ENCODE measurements at regions of chr11 and their contacts with region 1.

Region 1: GRCh38 chr11:45846974-45847910 is at the start of gene CRY2:
- DNase-seq: peak; percentile 98
- ATAC-seq: peak; percentile 86
- H3K4me3 ChIP-seq: peak within 1 kb of the TSS; percentile 94
- H3K27ac ChIP-seq: peak within 1 kb of the TSS; percentile 43
- H3K4me1 ChIP-seq: peaks cover 23% of the 10 kb centered on the region
- H3K27me3 ChIP-seq: no peaks in the 10 kb centered on the region
- CTCF ChIP-seq: no peak
- total RNA-seq, gene CRY2: 9.5 and 12.4 TPM in 2 replicates

Region 2: DNA sequence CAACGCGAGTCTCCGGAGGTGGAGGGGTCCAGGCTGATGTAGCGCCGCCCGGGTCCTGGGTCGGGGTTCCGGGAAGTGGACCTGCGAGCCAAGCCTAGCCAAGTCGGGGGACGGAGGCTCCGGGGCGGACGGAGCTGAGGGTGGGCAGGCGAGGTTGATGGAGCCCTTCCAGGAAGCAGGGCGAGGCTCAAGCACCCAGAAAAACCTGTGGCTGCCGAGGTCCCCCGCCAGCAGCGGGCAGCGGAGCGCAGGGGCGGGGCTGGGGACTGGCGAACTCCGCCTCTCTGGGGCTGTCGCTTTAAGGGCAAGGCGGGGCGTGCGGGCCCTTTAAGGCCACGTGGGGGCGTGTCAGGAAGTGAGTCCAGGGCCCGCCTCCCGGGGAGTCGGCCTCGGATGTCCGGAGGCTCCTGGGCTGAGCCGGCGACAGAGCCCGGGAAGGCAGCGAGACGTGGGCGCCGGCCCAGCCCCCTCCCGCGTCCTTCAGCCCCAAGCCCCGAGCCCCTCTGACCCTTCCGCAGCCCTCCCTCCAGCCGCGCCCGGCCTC is 42.4 kb before region 1 on chr11 and contains the start of gene SLC35C1:
- CTCF ChIA-PET with region 1: no interaction called
- POLR2A ChIA-PET with region 1: no interaction called
- intact Hi-C with region 1: loop called (anchors 2 kb)
- DNase-seq: peak; percentile 92
- ATAC-seq: peak; percentile 91
- H3K4me3 ChIP-seq: peak within 1 kb of the TSS; percentile 91
- H3K27ac ChIP-seq: peak within 1 kb of the TSS; percentile 20; the same call in 1 of the 2 replicates
- H3K4me1 ChIP-seq: peaks cover 26% of the 10 kb centered on the region
- H3K27me3 ChIP-seq: no peaks in the 10 kb centered on the region
- CTCF ChIP-seq: no peak
- total RNA-seq, gene SLC35C1: 9.5 and 13.5 TPM in 2 replicates

Region 3: DNA sequence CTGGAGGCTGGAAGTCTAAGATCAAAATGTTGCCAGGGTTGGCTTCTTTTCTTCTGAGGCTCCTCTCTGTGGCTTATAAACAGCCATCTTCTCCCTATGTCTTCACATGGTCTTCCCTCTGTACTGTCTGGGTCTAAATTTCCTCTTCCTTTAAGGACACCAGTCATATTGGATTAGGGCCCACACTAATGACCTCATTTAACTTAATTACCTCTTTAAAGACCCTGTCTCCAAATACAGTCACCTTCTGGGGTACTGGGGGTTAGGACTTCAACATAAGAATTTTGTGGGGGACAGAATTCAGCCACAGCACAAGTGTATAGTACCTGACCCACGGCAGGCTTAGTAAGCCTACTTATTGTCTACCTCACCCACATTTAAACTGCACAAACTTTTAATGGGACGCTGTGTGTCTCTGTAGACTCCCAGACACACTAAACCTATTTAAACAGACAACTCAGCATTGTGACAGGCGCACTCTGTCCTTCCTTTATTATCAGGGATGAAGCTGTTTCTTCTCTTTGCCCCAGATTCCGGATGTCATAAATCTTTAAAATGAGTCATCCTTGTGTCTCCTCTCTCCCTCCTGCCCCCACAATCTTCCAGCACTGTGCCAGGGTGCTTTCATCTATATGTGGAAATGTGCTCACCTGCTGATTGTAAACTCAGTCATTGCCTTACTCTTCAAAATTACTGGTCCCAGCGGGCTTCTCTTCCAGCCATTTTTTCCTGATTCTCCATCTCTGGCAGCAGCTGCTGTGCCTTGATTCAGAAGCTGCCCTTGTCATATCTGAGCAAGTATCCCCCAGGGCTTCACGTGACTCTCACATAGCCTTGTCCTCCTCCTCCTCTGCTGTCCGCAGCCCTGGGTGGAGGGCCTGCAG is 32.8 kb after region 1 on chr11:
- CTCF ChIA-PET with region 1: no interaction called
- POLR2A ChIA-PET with region 1: no interaction called
- intact Hi-C with region 1: loop called (anchors 1 kb)
- DNase-seq: peak; percentile 82
- ATAC-seq: peak; percentile 96
- H3K4me3 ChIP-seq: no peak overlapping the region
- H3K27ac ChIP-seq: peak overlapping the region; percentile 48
- H3K4me1 ChIP-seq: peaks cover 18% of the 10 kb centered on the region
- H3K27me3 ChIP-seq: no peaks in the 10 kb centered on the region
- CTCF ChIP-seq: no peak

Region 4: DNA sequence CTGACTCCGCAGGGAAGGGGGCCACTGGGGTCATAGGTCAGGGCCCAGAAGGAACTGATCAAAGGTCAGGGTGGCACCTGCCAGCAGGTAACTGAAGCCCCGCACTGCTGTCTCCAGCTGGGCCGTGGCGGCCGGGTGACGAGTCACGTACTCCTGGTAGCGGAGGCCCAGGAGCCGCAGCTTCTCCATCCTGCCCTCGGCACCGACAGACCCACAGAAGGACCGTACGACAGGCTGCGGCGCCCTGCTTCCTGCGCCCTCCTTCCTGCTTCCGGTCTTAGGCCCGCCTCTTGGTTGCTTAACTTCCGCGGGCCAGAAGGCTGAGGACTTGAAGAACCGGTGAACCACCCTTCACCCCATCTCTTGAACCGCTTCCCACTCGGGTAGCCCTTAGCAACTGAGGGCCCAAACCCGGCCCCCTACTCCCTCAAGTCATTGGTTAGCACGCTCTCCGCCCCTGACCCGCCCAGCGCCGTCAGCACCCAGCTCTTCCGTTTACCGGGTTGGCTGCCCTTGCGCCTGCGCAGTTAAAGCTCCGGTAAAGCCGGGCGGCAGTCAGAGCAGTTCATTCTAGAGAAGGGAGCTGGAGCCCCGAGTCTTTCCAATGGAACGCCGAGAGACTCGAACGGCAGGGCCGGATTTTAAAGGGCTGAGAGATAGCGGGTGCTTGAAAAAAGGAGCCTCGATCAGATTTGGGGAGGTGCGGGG is 70.5 kb after region 1 on chr11 and contains the start of gene PEX16:
- CTCF ChIA-PET with region 1: no interaction called
- POLR2A ChIA-PET with region 1: interaction called, 5 read pairs
- intact Hi-C with region 1: loop called (anchors 1 kb)
- DNase-seq: peak; percentile 96
- ATAC-seq: peak; percentile 83
- H3K4me3 ChIP-seq: peak within 1 kb of the TSS; percentile 96
- H3K27ac ChIP-seq: peak within 1 kb of the TSS; percentile 69
- H3K4me1 ChIP-seq: peaks cover 3% of the 10 kb centered on the region; the same call in 1 of the 2 replicates
- H3K27me3 ChIP-seq: no peaks in the 10 kb centered on the region
- CTCF ChIP-seq: no peak
- total RNA-seq, gene PEX16: 43.5 and 56.7 TPM in 2 replicates

Region 5: DNA sequence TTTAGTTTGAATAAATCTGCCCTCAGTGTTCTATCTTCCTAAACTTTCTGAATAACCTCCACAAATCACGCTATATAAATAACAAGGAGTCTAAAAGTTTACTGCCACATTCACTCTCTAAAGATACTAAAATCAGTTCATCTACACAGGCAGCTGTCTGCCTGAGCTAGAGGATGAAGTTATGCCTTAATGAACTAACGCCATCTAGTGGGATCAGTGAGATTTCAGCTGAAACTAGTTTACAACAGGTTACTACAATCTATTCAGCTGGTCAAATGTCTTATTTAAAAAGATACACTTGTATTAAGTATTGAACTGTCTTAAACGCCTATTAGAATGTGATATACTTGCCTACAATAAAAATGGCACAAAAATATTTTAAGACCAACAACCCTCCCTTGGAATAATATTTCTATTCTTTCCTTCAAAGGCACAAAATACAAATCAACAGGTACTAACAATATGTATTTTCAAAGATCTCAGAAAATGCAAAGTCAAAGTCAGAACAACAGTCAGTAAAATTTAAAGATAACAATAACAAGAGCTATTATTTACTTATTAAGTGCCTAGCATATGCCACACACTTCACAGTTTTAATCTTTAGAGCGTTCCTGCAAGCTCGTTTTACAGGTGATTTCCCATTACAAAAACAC is 159.3 kb after region 1 on chr11:
- CTCF ChIA-PET with region 1: interaction called, 3 read pairs
- POLR2A ChIA-PET with region 1: no interaction called
- intact Hi-C with region 1: loop called (anchors 5 kb)
- DNase-seq: peak; percentile 83
- ATAC-seq: peak; percentile 92
- H3K4me3 ChIP-seq: no peak overlapping the region
- H3K27ac ChIP-seq: no peak overlapping the region
- H3K4me1 ChIP-seq: no peaks in the 10 kb centered on the region
- H3K27me3 ChIP-seq: no peaks in the 10 kb centered on the region
- CTCF ChIP-seq: peak; percentile 86

Measured in PC-3 (cell line).